IMR-90 (cell line): ENCODE measurements at regions of chr11 and their contacts with region 1.

Region 1: DNA sequence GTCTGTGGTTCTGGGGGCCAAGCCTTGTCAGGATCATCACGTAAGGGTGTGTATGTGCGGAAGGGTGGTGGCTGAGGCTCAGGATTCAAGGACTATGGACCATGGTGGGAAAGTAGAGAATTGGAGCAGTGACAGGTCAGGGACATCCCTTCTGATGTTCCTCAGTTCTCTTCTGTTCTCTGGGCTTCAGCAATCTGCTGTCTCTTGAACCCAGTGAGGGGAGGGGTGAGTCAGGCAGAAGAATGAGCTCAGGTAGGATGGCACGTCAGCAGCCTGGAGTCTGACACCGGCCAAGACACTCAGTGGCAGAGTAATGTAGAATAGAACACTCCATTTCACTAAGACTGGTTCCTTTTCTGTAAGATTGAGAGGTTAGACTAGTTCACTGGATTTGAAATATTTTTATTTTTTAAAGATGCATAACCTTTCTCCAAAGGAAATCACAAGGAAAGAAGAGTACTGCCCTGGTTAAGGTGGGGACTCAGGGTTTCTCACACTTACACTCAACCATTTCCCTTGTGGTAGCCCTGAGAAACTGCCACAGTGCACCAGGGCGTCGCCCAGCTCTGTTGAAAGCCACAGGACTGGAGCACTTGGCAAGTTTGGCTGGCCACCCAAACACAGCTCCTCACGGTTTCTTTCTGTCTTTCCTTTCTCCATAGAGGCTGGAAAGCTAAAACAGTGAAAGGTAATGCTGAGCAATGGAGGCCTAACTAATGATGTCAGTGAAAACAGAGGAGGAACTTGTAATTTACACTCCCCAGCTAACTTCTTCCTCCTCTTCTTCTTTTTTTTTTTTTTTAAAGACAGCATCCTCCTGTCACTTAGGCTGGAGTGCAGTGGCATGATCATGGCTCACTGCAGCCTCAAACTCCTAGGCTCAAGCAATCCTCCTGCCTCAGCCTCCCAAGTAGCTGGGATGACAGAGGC is 23.1 kb upstream of the MICAL2 start:
- DNase-seq: peak; percentile 78
- ATAC-seq: peak; percentile 5; the same call in 1 of the 2 replicates
- H3K4me3 ChIP-seq: peak overlapping the region; percentile 46; the same call in 1 of the 2 replicates
- H3K27ac ChIP-seq: peak overlapping the region; percentile 97
- H3K4me1 ChIP-seq: peaks cover 36% of the 10 kb centered on the region
- H3K27me3 ChIP-seq: no peaks in the 10 kb centered on the region
- CTCF ChIP-seq: 0 out of 2 replicates have a peak, but pooled peaks have one; percentile 24
- POLR2A ChIP-seq: peak; percentile 81; the same call in 1 of the 2 replicates
- RAD21 ChIP-seq: no peak

Region 2: GRCh38 chr11:11374358-11375148 is 712.8 kb before region 1 on chr11:
- CTCF ChIA-PET with region 1: no interaction called
- POLR2A ChIA-PET with region 1: no interaction called
- dilution Hi-C with region 1: no loop called
- in situ Hi-C with region 1: no loop called
- intact Hi-C with region 1: no loop called
- DNase-seq: no peak
- ATAC-seq: no peak
- H3K4me3 ChIP-seq: no peak overlapping the region
- H3K27ac ChIP-seq: no peak overlapping the region
- H3K4me1 ChIP-seq: no peaks in the 10 kb centered on the region
- H3K27me3 ChIP-seq: peaks cover 3% of the 10 kb centered on the region; the same call in 1 of the 2 replicates
- CTCF ChIP-seq: no peak
- POLR2A ChIP-seq: no peak
- RAD21 ChIP-seq: no peak

Region 3: DNA sequence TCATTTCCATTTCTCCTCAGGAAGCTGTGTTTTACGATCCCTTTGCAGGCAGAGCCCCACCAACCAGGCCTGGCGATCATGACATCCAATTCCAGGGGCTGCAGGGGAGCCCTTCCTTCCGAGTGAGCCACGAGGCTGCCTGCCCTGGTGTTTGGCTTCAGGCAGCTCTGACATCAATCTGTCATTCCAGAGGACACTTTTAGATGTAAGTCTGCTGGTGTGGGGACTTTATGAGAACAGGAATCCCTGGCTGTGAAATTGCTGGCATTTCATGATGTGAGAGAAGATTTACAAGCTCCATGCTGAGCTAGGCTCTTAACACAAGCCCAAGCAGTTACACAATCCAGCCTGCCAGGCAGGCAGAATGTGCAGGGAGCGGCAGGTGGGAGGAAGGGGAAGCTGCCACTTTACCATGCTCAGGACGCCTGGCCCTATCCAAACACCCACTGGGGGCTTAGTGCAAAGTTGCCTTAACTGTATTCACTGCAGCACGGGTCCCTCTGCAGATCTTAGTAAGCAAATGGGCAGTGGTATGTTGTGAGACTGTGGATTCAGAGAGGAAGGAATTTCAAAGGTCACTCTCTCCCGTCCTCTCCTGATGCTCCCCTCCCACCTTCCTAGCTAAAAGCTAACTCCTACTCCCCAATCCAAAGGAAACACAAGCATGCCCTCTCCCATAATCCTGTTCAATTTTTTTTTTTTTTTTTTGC is 20.4 kb before region 1 on chr11:
- CTCF ChIA-PET with region 1: interaction called, 3 read pairs
- POLR2A ChIA-PET with region 1: interaction called, 17 read pairs
- dilution Hi-C with region 1: no loop called
- in situ Hi-C with region 1: no loop called
- intact Hi-C with region 1: no loop called
- DNase-seq: peak; percentile 56
- ATAC-seq: peak; percentile 63
- H3K4me3 ChIP-seq: no peak overlapping the region
- H3K27ac ChIP-seq: peak overlapping the region; percentile 86
- H3K4me1 ChIP-seq: peaks cover 20% of the 10 kb centered on the region
- H3K27me3 ChIP-seq: no peaks in the 10 kb centered on the region
- CTCF ChIP-seq: no peak
- POLR2A ChIP-seq: peak; percentile 40; the same call in 1 of the 2 replicates
- RAD21 ChIP-seq: no peak

Region 4: DNA sequence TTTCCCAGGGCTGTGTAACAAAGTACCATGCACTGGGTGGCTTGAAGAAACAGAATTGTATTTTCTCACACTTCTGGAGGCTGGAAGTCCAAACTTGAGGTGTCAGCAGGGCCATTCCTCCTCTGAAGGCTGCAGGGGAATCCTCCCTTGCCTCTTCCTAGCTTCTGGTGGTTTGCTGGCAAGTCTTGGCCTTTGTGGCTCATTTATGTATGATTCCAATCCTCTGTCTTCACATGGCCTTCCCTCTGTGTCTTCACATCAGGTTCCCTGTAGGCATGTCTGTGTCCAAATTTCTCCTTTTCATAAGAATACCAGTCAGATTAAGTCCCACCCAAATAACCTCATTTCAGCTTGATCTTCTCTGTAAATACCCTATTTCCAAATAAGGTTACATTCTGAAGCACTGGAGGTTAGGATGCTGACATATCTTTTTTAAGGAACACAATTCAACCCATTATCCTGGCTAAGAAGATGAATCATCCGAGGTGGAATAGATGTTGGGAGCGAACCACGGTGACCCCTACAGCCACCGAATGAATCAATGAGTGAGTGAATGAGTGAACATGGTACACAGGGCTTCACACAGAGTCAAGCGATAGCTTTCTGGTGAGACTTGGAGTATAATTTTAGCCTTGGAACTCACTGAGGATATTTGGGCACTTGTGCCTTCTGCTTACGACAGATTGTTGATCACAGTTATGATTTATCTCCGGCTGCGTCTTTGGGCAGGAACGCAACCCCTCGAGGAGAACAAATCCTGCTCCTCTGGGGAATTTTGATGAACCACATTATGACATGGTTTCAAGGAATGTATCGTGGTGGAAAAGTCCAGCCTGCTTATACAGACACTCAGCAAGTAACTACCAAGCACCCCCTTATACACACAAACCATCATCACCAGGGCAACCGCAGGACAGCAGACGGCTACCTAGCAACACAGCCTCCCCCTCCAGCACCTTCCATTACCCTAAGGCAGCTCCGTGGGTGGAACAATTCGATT is 11.2 kb before region 1 on chr11:
- CTCF ChIA-PET with region 1: no interaction called
- POLR2A ChIA-PET with region 1: interaction called, 23 read pairs
- dilution Hi-C with region 1: no loop called
- in situ Hi-C with region 1: no loop called
- intact Hi-C with region 1: no loop called
- DNase-seq: peak; percentile 100
- ATAC-seq: peak; percentile 81
- H3K4me3 ChIP-seq: peak overlapping the region; percentile 9; the same call in 1 of the 2 replicates
- H3K27ac ChIP-seq: peak overlapping the region; percentile 80
- H3K4me1 ChIP-seq: peaks cover 26% of the 10 kb centered on the region
- H3K27me3 ChIP-seq: no peaks in the 10 kb centered on the region
- CTCF ChIP-seq: no peak
- POLR2A ChIP-seq: peak; percentile 62
- RAD21 ChIP-seq: peak; percentile 17; the same call in 1 of the 2 replicates

Region 5: GRCh38 chr11:12110201-12110713 is 22.9 kb after region 1 on chr11 and contains the start of gene MICAL2:
- CTCF ChIA-PET with region 1: interaction called, 4 read pairs
- POLR2A ChIA-PET with region 1: interaction called, 4 read pairs
- dilution Hi-C with region 1: no loop called
- in situ Hi-C with region 1: no loop called
- intact Hi-C with region 1: loop called (anchors 2 kb)
- DNase-seq: peak; percentile 85
- ATAC-seq: peak; percentile 93
- H3K4me3 ChIP-seq: peak within 1 kb of the TSS; percentile 80
- H3K27ac ChIP-seq: peak within 1 kb of the TSS; percentile 71
- H3K4me1 ChIP-seq: peaks cover 30% of the 10 kb centered on the region
- H3K27me3 ChIP-seq: no peaks in the 10 kb centered on the region
- CTCF ChIP-seq: no peak
- POLR2A ChIP-seq: peak; percentile 90
- RAD21 ChIP-seq: no peak
- total RNA-seq, gene MICAL2: 285 and 336 TPM in 2 replicates

Region 6: GRCh38 chr11:12235947-12236743 is 148.8 kb after region 1 on chr11:
- CTCF ChIA-PET with region 1: interaction called, 14 read pairs
- POLR2A ChIA-PET with region 1: no interaction called
- dilution Hi-C with region 1: no loop called
- in situ Hi-C with region 1: no loop called
- intact Hi-C with region 1: loop called (anchors 10 kb)
- DNase-seq: peak; percentile 72
- ATAC-seq: peak; percentile 61
- H3K4me3 ChIP-seq: no peak overlapping the region
- H3K27ac ChIP-seq: peak overlapping the region; percentile 62
- H3K4me1 ChIP-seq: peaks cover 7% of the 10 kb centered on the region
- H3K27me3 ChIP-seq: no peaks in the 10 kb centered on the region
- CTCF ChIP-seq: peak; percentile 68
- POLR2A ChIP-seq: no peak
- RAD21 ChIP-seq: peak; percentile 76